ENCODE measurements at regions of chr19 and their contacts with region 1.

Region 1: DNA sequence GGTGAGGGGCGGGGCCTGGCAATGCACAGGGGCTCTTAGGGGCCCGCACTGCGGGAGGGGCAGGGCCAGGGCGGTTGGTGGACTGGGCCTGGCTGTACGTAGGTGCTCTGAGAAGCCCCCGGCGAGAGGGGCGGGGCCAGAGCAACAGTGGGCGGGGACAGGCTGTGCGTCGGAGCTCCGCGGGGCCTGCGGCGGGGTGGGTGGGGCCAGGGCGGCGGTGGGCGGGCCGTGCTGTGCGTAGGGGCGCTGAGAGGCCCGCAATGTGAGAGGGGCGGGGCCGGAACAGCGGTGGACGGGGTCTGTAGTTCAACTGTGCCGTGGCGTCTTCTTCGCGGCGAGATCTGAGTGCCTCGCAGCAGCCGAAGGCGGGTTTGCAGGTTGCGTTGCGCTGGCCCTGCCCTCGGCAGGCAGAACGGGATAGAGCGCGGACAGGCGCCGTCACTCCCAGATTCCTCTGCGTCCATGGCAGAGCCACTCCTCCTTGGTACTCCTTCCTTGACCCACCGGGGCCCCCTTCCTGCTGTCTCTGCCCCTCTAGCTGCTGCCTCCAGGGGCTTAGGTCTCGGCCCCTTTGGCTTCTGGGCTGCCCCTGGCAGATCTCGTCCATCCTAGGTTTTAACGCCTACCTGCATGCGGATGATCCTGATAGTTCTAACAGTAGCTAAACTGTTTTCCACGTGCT is 33.2 kb downstream of the CCNE1 start:
- DNase-seq: peak; percentile 75 to 82 (median 81)
- H3K4me3 ChIP-seq: peak overlapping the region; percentile 90 to 98 (median 95)
- H3K4me3 Mint-ChIP-seq: peak overlapping the region; percentile 91 to 95
- H3K27ac ChIP-seq: peak overlapping the region; percentile 17 to 62
- H3K27ac Mint-ChIP-seq: peak overlapping the region; percentile 78 to 93 (median 86)
- H3K4me1 ChIP-seq: peaks cover 28 to 31% of the 10 kb centered on the region in 2 donors
- H3K4me1 Mint-ChIP-seq: peaks cover 26% of the 10 kb centered on the region
- H3K27me3 ChIP-seq: no peaks in the 10 kb centered on the region
- H3K27me3 Mint-ChIP-seq: peaks cover 12 to 18% (median 12%) of the 10 kb centered on the region in 3 donors
- CTCF ChIP-seq: no peak

Region 2: GRCh38 chr19:29811125-29812079 is 33.6 kb before region 1 on chr19 and contains the start of gene CCNE1:
- intact Hi-C with region 1: loop called (anchors 1 to 2 kb)
- DNase-seq: peak; percentile 78 to 83 (median 79)
- H3K4me3 ChIP-seq: peak within 1 kb of the TSS; percentile 43 to 77 (median 63)
- H3K4me3 Mint-ChIP-seq: peak within 1 kb of the TSS; percentile 82 to 84
- H3K27ac ChIP-seq: peak within 1 kb of the TSS in 1 of 2 donors; percentile 29
- H3K27ac Mint-ChIP-seq: peak within 1 kb of the TSS in 6 of 7 donors; percentile 53 to 86 (median 76)
- H3K4me1 ChIP-seq: peaks cover 8 to 16% of the 10 kb centered on the region in 2 donors
- H3K4me1 Mint-ChIP-seq: peaks cover 11% of the 10 kb centered on the region
- H3K27me3 ChIP-seq: no peaks in the 10 kb centered on the region
- H3K27me3 Mint-ChIP-seq: peaks cover 3 to 7% (median 5%) of the 10 kb centered on the region in 3 donors
- CTCF ChIP-seq: no peak
- polyA plus RNA-seq, gene CCNE1: 1.7 TPM in 1 of 3 donors, not detected in the others

Measured in CD14-positive monocyte (primary cell).